GM10248 (cell line): ENCODE measurements at regions of chr2 and their contacts with region 1.

Region 1: GRCh38 chr2:199775267-199775666 is 75.7 kb downstream of the FTCDNL1 start:
- DNase-seq: no peak
- CTCF ChIP-seq: no peak

Region 2: DNA sequence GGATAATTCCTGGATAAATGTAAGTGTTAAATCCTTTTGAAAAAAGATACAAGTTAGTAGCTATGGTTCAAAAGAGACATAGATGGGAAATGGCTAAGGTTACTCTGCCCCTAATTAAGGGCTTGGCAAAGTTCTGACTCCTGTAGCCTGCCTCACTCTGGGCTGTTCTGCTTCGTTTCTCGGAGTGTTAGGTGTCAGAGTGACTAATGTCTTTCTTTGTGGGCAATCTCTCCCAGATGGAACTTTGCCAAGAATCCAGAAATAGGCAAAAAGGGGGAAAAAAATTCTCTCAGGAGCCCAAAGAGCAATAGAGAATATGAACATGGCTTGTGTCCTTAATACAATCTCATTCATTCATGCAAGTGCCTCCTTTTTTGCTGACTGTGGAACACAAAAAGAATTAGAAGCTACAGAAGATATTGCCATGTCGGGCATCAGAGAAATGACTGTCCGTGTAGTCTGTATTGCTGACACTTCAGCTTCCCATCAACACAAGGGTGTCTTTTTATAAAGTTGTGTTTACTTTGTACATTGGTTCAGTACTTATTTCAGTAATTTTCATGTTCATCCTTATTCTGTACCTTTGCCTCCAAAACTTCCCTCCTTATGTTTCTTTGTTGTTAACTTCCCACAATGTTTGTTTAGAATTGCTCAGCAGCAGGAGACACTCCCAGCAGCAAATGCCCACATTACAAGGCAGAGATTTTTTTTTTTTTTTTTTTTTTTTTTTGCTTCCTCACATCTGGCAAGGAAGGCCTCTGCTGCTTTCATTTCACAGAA is 58.3 kb before region 1 on chr2:
- CTCF ChIA-PET with region 1: no interaction called
- POLR2A ChIA-PET with region 1: no interaction called
- DNase-seq: no peak
- CTCF ChIP-seq: no peak

Region 3: GRCh38 chr2:199764273-199764800 is 10.9 kb before region 1 on chr2:
- CTCF ChIA-PET with region 1: interaction called, 17 read pairs
- POLR2A ChIA-PET with region 1: no interaction called
- DNase-seq: no peak
- CTCF ChIP-seq: no peak